ENCODE measurements at regions of chrX and their contacts with region 1.

Region 1: GRCh38 chrX:100685284-100685996 is 41.4 kb downstream of the SRPX2 start:
- DNase-seq: peak; percentile 58 to 82
- H3K4me3 ChIP-seq: no peak overlapping the region
- H3K27ac ChIP-seq: peak overlapping the region; percentile 45 to 57
- H3K4me1 ChIP-seq: no peaks in the 10 kb centered on the region
- H3K27me3 ChIP-seq: no peaks in the 10 kb centered on the region
- CTCF ChIP-seq: peak; percentile 71 to 97 (median 88)
- POLR2A ChIP-seq: no peak

Region 2: DNA sequence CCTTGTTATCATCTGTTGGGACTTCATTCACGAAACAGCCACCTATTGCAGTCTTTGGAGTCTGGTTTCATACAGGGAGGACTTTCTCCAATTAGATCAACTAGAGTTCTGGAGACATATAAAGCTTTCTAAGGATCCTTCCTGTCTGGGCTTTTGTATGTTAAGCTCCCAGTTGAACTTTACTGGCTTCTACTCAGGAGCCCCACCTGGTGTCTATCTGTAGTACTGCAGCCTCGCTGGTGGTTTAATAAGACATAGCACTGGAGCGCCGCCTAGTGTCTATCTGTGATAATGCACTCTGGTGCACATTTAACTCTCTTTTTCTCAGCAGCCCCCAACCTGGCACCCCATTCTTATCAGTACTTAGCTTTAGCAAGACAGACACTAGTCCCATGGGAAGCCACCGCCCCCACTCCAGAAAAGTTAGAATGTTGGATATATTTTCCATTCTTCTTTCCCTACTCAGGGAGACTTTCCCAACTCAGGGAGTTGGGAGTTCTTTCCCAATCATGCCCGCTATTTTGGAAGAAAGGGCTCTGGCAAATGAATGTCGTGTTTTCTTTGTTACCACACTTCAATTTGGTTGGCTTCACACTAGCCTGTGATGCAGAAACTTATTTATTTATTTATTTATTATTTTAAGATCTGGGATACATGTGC is 83.4 kb after region 1 on chrX:
- intact Hi-C with region 1: loop called (anchors 5 kb)
- DNase-seq: peak; percentile 81 to 90
- H3K4me3 ChIP-seq: no peak overlapping the region
- H3K27ac ChIP-seq: no peak overlapping the region
- H3K4me1 ChIP-seq: no peaks in the 10 kb centered on the region
- H3K27me3 ChIP-seq: no peaks in the 10 kb centered on the region
- CTCF ChIP-seq: peak; percentile 97 to 99 (median 98)
- POLR2A ChIP-seq: no peak

Region 3: DNA sequence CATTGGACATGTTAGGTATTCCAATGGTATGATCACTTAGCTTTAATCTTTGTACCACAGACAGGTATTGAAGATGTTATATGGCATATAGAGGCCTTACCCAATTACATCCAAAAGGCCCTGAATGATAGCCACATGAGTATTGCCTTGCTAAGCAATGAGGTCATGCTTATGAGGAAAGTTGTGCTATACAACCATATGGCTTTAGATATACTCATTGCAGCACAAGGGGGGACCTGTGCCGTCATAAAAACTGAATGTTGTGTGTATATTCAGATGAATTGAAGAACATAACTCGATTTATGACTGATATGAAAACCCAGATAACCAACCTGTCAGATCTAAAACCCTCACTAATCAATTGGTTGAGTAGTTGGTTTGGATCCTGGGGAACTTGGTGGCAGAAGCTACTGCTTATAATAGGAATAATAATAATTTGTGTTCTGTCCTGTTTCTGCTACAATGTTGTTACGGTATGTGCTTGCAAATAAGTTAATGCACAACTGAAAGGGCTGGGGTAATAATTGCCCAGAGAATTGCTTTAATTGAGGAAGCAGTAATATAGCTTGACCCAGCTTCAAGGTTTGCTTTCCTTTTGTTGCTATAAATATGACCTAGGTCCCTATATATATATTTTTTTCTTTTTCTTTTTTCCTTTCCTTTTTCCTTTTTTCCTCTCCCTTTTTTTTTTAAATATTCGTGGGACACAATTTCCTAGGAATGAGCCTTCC is 113.2 kb after region 1 on chrX:
- intact Hi-C with region 1: no loop called
- DNase-seq: no peak
- H3K4me3 ChIP-seq: no peak overlapping the region
- H3K27ac ChIP-seq: no peak overlapping the region
- H3K4me1 ChIP-seq: no peaks in the 10 kb centered on the region
- H3K27me3 ChIP-seq: no peaks in the 10 kb centered on the region
- CTCF ChIP-seq: no peak
- POLR2A ChIP-seq: no peak

Measured in uterus (tissue), 4 donors.